ENCODE measurements at regions of chr1 and their contacts with region 1.

Region 1: DNA sequence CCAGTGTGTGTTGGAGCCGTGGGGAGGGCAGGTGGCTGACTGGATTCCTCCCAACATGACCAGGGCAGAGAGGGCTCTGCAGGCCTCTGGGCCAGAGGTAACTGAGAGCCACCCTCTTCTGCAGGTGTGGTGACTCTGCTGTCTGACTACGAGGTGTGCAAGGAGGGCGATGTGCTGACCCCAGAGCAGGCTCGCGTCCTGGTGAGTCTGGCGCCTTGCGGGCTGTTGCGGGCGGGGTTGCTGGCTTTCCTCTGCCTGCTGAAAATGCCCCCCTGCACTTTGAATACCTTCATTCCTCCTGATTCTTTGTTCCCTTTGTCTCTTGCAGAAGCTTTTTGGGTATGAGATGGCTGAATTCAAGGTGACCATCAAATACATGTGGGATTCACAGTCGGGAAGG is 6.7 kb downstream of the MRTO4 start:
- DNase-seq: no peak
- H3K4me3 ChIP-seq: no peak overlapping the region
- H3K27ac ChIP-seq: no peak overlapping the region
- H3K4me1 ChIP-seq: peaks cover 0 to 6% (median 4%) of the 10 kb centered on the region in 4 donors
- H3K27me3 ChIP-seq: no peaks in the 10 kb centered on the region
- CTCF ChIP-seq: no peak

Region 2: DNA sequence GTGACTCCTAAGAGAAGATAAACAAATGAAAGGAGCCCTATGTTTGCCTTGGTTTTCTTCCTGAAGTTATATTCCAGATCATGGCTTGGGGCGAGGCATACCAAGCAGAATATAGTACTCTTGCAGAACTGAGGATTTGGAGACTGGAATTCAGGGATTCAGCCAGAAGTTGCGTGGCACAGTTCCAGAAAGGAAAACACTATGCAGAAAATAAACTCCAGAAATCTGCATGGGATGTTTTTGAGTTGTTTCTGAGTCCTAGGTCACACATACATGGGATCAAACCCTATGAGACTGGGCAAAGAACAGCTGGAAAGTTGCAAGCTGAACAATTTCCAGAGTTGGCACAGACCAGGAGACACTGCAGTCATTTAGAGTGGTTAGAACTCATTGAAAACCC is 259.0 kb before region 1 on chr1:
- intact Hi-C with region 1: no loop called
- DNase-seq: peak in 1 of 2 donors; percentile 77
- H3K4me3 ChIP-seq: no peak overlapping the region
- H3K27ac ChIP-seq: peak overlapping the region; percentile 59 to 63
- H3K4me1 ChIP-seq: peaks cover 0 to 32% (median 22%) of the 10 kb centered on the region in 4 donors
- H3K27me3 ChIP-seq: no peaks in the 10 kb centered on the region
- CTCF ChIP-seq: no peak

Region 3: GRCh38 chr1:19220991-19221390 is 37.4 kb before region 1 on chr1:
- intact Hi-C with region 1: loop called (anchors 2 kb)
- DNase-seq: no peak
- H3K4me3 ChIP-seq: no peak overlapping the region
- H3K27ac ChIP-seq: no peak overlapping the region
- H3K4me1 ChIP-seq: no peaks in the 10 kb centered on the region
- H3K27me3 ChIP-seq: no peaks in the 10 kb centered on the region
- CTCF ChIP-seq: no peak